ENCODE measurements at regions of chr2 and their contacts with region 1.

Region 1: DNA sequence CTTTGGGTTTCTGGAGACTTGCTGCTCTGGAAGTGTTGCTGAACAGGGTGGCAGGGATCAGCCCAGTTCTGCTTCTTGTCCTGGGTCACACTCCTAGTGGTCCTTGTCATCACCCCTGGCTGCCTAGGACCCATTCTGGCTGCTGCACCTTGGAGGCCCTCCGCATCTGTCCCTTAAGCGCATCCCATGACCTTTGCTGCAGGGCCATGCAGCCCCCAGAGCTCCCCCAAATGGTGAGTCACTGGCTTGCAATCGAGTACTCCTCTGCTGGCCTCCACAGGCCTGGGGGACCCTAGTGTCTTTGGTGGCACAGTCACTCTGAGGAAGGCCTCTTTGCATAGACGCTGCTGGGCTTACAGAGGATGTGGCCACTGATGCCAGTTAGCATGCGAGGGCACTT is 188.5 kb downstream of the ASB1 start:
- DNase-seq: no peak
- H3K4me3 ChIP-seq: no peak overlapping the region
- H3K27ac ChIP-seq: no peak overlapping the region
- H3K4me1 ChIP-seq: no peaks in the 10 kb centered on the region
- H3K27me3 ChIP-seq: no peaks in the 10 kb centered on the region
- CTCF ChIP-seq: no peak
- EP300 ChIP-seq: no peak
- POLR2A ChIP-seq: no peak

Region 2: DNA sequence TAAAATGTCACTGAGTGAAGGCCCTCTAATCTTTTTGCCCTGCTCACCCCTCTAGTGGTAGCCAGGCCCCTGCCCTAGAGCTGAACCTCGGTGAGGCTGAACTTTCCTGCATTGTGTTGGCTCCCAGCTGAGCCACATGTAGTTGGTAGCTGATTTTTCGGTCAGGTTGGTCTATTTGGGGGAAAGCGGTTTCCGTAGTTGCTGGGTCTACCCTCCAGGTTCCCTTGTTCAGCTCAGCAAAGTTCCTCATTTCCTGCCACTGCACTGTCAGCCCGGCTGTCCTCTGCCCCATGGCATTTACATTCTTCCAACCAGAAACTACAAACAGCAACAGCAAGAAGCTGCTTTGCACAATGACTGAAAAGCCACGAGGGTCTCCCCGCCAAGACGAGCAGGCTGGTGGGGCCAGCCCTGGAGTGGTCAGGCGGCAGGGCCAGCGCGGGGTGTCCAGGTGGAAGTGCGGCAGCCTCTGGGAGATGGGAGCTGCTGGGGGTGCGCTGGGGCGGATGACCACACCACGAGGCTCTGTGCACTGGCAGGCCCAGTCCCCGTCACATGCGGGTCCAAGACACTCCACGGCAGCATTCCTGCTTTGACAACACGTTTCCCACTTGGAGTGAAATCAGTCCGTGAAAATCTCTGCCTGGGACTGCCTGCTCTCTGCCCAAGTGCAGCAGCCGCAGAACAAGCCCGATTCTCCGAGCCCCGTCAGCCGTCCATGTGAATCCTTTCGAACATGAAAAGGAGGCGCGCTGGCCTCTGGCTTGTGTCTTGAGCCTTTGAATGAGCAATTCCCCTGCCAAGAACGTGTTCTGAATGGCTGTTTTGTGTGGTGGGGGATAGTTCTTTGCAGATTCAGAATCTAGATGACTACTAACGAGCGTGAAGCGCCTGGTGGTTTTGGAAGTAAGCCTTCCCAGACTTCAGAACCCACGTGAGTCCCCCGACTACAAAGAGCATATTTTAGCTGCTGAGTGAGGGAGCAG is 29.1 kb before region 1 on chr2:
- in situ Hi-C with region 1: no loop called
- intact Hi-C with region 1: loop called (anchors 1 kb)
- DNase-seq: no peak
- H3K4me3 ChIP-seq: no peak overlapping the region
- H3K27ac ChIP-seq: no peak overlapping the region
- H3K4me1 ChIP-seq: no peaks in the 10 kb centered on the region
- H3K27me3 ChIP-seq: no peaks in the 10 kb centered on the region
- CTCF ChIP-seq: no peak
- EP300 ChIP-seq: no peak
- POLR2A ChIP-seq: no peak

Measured in transverse colon (tissue), 4 donors.